PC-3 (cell line): ENCODE measurements at regions of chr10 and their contacts with region 1.

Region 1: GRCh38 chr10:36489611-36490228 is 635.7 kb upstream of the ANKRD30A start:
- DNase-seq: peak; percentile 96
- ATAC-seq: peak; percentile 9
- H3K4me3 ChIP-seq: no peak overlapping the region
- H3K27ac ChIP-seq: peak overlapping the region; percentile 83
- H3K4me1 ChIP-seq: peaks cover 55% of the 10 kb centered on the region
- H3K27me3 ChIP-seq: no peaks in the 10 kb centered on the region
- CTCF ChIP-seq: no peak

Region 2: DNA sequence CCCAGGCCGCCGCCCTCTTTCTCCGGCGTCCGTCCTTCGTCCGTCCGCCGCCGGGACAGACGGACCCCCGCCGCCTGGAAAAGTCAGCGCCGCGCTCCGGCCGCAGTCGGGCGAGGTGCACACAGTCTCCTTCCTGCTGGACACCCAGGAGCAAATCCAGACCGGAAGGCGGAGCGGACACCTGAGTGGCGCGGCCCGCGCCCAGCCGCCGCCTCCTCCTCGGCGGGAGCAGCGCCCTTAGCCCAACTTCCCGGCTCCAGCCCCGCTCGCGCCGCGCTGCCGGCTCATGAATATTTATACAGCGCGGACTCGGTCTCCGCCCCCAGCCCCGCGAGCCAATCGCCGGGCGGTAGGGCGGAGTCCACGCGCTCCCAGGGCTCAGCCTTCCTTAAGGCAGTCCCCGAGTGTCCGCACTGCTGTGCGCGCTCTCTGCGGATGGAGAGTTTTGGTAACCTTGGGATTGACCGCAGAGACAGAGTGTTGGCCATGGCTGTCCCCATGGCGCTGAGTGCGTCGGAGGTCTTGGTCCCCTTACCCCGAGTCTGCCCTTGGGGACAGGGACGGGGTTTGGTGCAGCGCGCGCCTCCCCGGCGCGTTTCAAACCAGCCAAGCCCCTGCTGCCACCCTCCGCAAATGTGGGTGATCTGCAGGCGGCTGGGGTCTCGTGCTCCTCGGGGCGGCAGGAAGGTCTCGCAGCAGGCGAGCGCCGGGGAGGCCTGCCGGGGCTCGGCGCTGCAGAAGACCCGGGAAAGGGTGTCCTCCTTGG is 847.5 kb before region 1 on chr10 and contains the start of gene FZD8:
- CTCF ChIA-PET with region 1: no interaction called
- POLR2A ChIA-PET with region 1: interaction called, 8 read pairs
- intact Hi-C with region 1: loop called (anchors 1 kb)
- DNase-seq: peak; percentile 100
- ATAC-seq: peak; percentile 73
- H3K4me3 ChIP-seq: peak within 1 kb of the TSS; percentile 80
- H3K27ac ChIP-seq: peak within 1 kb of the TSS; percentile 62
- H3K4me1 ChIP-seq: peaks cover 30% of the 10 kb centered on the region
- H3K27me3 ChIP-seq: no peaks in the 10 kb centered on the region
- CTCF ChIP-seq: peak; percentile 60; the same call in 1 of the 2 replicates
- total RNA-seq, gene FZD8: 275 and 375 TPM in 2 replicates

Region 3: GRCh38 chr10:35889971-35890677 is 599.6 kb before region 1 on chr10:
- CTCF ChIA-PET with region 1: no interaction called
- POLR2A ChIA-PET with region 1: no interaction called
- intact Hi-C with region 1: loop called (anchors 1 kb)
- DNase-seq: peak; percentile 74
- ATAC-seq: peak; percentile 90
- H3K4me3 ChIP-seq: no peak overlapping the region
- H3K27ac ChIP-seq: peak overlapping the region; percentile 38
- H3K4me1 ChIP-seq: peaks cover 25% of the 10 kb centered on the region
- H3K27me3 ChIP-seq: no peaks in the 10 kb centered on the region
- CTCF ChIP-seq: no peak

Region 4: DNA sequence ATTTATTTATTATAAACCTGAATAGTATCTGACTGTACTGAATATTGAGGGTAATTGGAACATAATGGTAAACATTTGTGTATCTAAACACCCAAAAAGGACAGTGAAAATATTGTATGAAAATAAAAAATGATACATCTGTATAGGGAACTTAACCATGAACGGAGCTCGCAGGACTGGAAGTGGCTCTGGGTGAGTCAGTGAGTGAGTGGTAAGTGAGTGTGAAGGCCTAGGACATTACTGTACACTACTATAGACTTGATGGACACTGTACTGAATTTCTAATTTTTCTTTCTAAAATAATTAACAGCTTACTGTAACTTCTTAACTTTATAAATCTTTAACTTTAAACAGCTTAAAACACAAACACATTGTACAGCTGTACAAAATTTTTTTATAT is 393.1 kb before region 1 on chr10:
- CTCF ChIA-PET with region 1: interaction called, 3 read pairs
- POLR2A ChIA-PET with region 1: no interaction called
- intact Hi-C with region 1: loop called (anchors 1 kb)
- DNase-seq: peak; percentile 97
- ATAC-seq: peak; percentile 71
- H3K4me3 ChIP-seq: no peak overlapping the region
- H3K27ac ChIP-seq: peak overlapping the region; percentile 58
- H3K4me1 ChIP-seq: peaks cover 29% of the 10 kb centered on the region
- H3K27me3 ChIP-seq: no peaks in the 10 kb centered on the region
- CTCF ChIP-seq: no peak

Region 5: DNA sequence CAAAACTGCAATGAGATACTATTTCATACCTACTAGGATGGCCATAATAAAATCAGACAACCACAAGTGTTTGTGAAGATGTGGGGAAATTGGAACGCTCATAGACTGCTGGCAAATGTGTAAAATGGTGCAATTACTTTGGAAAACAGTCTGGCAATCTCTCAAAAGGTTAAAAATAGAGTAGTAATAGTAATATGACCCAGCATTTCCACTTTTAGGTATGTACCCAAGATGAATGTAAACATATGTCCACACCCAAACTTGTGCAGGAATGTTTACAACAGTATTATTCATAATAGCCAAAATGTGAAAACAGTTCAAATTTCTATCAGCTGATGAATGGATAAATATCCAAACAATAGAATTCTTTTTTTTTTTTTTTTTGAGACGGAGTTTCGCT is 95.9 kb before region 1 on chr10:
- CTCF ChIA-PET with region 1: no interaction called
- POLR2A ChIA-PET with region 1: interaction called, 12 read pairs
- intact Hi-C with region 1: loop called (anchors 1 kb)
- DNase-seq: peak; percentile 99
- ATAC-seq: peak; percentile 88
- H3K4me3 ChIP-seq: no peak overlapping the region
- H3K27ac ChIP-seq: peak overlapping the region; percentile 21
- H3K4me1 ChIP-seq: peaks cover 13% of the 10 kb centered on the region
- H3K27me3 ChIP-seq: no peaks in the 10 kb centered on the region
- CTCF ChIP-seq: no peak

Region 6: DNA sequence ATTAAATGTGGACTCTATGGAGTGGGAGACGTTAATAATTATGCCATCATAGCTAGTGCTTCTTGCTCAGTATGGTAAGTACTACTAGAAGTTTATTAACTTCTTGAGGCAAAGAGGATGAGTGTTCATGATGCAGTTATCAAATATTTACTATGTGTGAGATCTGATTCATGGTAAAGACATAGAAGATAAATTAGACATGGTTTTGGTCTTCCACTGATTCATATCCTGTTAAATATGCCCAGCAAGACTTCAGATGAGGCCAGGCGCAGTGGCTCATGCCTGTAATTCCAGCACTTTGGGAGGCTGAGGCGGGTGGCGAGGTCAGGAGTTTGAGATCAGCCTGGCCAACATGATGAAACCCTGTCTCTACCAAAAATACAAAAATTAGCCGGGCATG is 88.6 kb after region 1 on chr10:
- CTCF ChIA-PET with region 1: no interaction called
- POLR2A ChIA-PET with region 1: no interaction called
- intact Hi-C with region 1: loop called (anchors 2 kb)
- DNase-seq: peak; percentile 100
- ATAC-seq: peak; percentile 96
- H3K4me3 ChIP-seq: no peak overlapping the region
- H3K27ac ChIP-seq: peak overlapping the region; percentile 84
- H3K4me1 ChIP-seq: peaks cover 19% of the 10 kb centered on the region
- H3K27me3 ChIP-seq: no peaks in the 10 kb centered on the region
- CTCF ChIP-seq: no peak

Region 7: GRCh38 chr10:36666451-36666850 is 176.7 kb after region 1 on chr10:
- CTCF ChIA-PET with region 1: no interaction called
- POLR2A ChIA-PET with region 1: no interaction called
- intact Hi-C with region 1: no loop called
- DNase-seq: no peak
- ATAC-seq: no peak
- H3K4me3 ChIP-seq: no peak overlapping the region
- H3K27ac ChIP-seq: no peak overlapping the region
- H3K4me1 ChIP-seq: peaks cover 28% of the 10 kb centered on the region
- H3K27me3 ChIP-seq: no peaks in the 10 kb centered on the region
- CTCF ChIP-seq: no peak